PC-3 (cell line): ENCODE measurements at regions of chr5 and their contacts with region 1.

Region 1: DNA sequence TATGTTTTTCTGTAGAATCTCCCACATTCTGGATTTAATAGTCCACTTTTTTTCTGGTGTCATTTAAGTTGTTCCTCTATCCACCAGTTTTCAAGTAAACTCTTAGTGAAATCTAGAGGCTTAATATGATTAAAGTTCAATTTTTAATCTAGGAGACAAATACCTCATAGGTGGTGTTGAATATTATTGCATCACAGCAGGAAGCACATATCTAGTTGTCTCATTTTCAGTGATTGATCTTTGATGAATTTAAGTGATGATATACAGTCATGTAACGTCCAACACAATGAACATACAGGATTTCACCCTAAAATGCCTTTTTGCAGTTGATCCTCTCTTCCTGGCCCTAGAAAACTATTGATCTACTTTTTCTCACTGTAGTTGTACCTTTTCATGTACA is 152.3 kb downstream of the NIPBL start:
- DNase-seq: no peak
- ATAC-seq: no peak
- H3K4me3 ChIP-seq: no peak overlapping the region
- H3K27ac ChIP-seq: no peak overlapping the region
- H3K4me1 ChIP-seq: no peaks in the 10 kb centered on the region
- H3K27me3 ChIP-seq: no peaks in the 10 kb centered on the region
- CTCF ChIP-seq: no peak

Region 2: GRCh38 chr5:37308796-37309195 is 279.9 kb after region 1 on chr5:
- CTCF ChIA-PET with region 1: no interaction called
- POLR2A ChIA-PET with region 1: interaction called, 11 read pairs
- intact Hi-C with region 1: no loop called
- DNase-seq: no peak
- ATAC-seq: no peak
- H3K4me3 ChIP-seq: no peak overlapping the region
- H3K27ac ChIP-seq: no peak overlapping the region
- H3K4me1 ChIP-seq: no peaks in the 10 kb centered on the region
- H3K27me3 ChIP-seq: no peaks in the 10 kb centered on the region
- CTCF ChIP-seq: no peak